WTC11 (cell line): ENCODE measurements at regions of chr19 and their contacts with region 1.

Region 1: DNA sequence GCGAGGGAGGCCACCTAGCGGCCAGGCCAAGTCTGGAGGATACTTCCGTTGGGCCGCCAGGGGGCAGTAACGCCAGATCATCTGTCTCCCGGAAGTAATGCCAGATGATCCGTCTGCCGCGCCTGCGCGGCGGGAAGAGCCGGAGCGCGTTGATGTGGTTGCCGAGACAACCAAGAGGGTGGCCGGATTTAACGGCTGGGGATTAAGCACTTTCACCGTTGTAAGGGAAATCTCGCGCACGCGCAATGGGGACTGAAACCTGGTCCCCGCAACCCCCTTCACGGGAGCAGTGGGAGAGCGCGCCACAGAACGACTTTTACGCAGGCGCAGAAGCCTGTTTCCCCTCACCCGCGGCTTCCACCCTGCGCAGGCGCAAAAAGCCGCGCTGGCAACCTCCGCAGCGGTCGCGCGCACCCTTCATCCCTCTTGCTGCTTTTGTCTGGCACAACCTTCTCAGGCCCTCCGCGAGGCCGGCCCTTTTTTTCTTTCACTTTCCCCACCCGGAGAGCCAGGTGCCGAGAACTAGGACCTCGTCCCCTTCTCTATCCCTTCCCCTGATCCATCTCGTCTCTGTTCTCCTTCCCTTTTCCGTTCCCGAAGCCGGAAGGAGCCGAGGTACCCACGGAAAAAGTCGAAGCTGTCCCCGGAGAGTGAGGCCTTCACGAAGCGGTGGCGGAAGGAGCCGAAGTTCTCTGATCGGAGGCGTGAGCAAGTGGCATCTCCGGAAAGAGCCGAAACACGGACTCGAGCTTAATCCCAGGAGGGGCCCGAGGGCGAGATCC is 886 bp upstream of the U2AF2 start:
- DNase-seq: peak; percentile 100
- ATAC-seq: peak; percentile 87
- H3K4me3 Mint-ChIP-seq: peak overlapping the region; percentile 93
- H3K27ac Mint-ChIP-seq: peak overlapping the region; percentile 98
- H3K4me1 Mint-ChIP-seq: peaks cover 37% of the 10 kb centered on the region
- H3K27me3 Mint-ChIP-seq: peaks cover 3% of the 10 kb centered on the region; the same call in 1 of the 2 replicates
- CTCF ChIP-seq: peak; percentile 91

Region 2: DNA sequence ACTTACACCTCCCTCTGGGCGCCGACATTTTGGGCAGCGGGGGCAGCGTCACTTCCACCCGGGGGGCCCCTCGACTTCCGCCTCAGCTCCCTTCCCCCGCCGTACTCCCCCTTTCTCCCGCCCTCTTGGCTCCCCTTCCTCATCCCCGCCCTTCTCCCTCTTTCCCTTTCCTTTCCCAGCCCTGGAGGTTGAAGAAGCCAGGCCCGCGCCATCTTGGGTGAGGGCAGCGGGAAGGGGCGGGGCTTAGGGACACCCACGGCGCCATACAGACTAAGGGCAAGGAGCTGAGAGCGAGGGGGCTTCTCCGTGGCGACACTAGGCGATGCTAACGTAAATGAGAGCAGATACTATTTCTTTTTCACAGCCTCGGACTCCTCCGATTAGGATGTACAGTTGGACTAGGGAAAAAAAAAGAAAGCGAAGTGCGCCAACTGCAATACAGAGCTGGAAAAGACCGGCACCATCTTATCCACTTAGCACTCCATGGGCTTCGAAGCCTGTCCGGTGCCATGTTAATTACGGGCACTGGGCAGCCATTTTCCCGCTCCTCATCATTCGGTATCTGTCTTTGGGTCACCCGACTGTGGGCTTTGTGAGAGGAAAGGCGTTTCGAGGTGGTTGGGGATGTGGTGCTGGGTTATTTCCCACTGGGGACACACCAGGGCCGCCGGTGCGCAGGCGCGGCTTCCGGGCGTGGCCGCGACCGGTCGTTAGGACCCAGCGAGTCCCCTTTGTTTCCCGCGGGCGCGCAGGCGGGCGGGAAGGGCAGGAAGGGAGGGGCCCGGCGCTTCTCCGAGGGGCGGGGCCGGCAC is 54.3 kb before region 1 on chr19 and contains the start of gene FIZ1:
- CTCF ChIA-PET with region 1: interaction called, 12 read pairs
- POLR2A ChIA-PET with region 1: interaction called, 9 read pairs
- DNase-seq: peak; percentile 98
- ATAC-seq: peak; percentile 54
- H3K4me3 Mint-ChIP-seq: peak within 1 kb of the TSS; percentile 98
- H3K27ac Mint-ChIP-seq: peak within 1 kb of the TSS; percentile 100
- H3K4me1 Mint-ChIP-seq: peaks cover 29% of the 10 kb centered on the region
- H3K27me3 Mint-ChIP-seq: no peaks in the 10 kb centered on the region; the same call in 1 of the 2 replicates
- CTCF ChIP-seq: no peak
- total RNA-seq, gene FIZ1: 20.1 to 22.7 TPM (median 20.6 TPM) in 3 replicates

Region 3: GRCh38 chr19:55624109-55625003 is 29.6 kb before region 1 on chr19 and contains the start of gene ZNF784:
- CTCF ChIA-PET with region 1: interaction called, 14 read pairs
- POLR2A ChIA-PET with region 1: no interaction called
- DNase-seq: peak; percentile 92
- ATAC-seq: peak; percentile 87
- H3K4me3 Mint-ChIP-seq: peak within 1 kb of the TSS; percentile 76
- H3K27ac Mint-ChIP-seq: peak within 1 kb of the TSS; percentile 90
- H3K4me1 Mint-ChIP-seq: peaks cover 15% of the 10 kb centered on the region
- H3K27me3 Mint-ChIP-seq: peaks cover 18% of the 10 kb centered on the region
- CTCF ChIP-seq: no peak
- total RNA-seq, gene ZNF784: 9.9 to 12.1 TPM (median 11.4 TPM) in 3 replicates

Region 4: GRCh38 chr19:55643348-55644176 is 10.4 kb before region 1 on chr19 and contains the start of gene ZNF581:
- CTCF ChIA-PET with region 1: interaction called, 17 read pairs
- POLR2A ChIA-PET with region 1: interaction called, 4 read pairs
- DNase-seq: peak; percentile 72
- ATAC-seq: peak; percentile 9
- H3K4me3 Mint-ChIP-seq: peak within 1 kb of the TSS; percentile 89
- H3K27ac Mint-ChIP-seq: peak within 1 kb of the TSS; percentile 93
- H3K4me1 Mint-ChIP-seq: peaks cover 26% of the 10 kb centered on the region
- H3K27me3 Mint-ChIP-seq: peaks cover 9% of the 10 kb centered on the region
- CTCF ChIP-seq: no peak
- total RNA-seq, gene ZNF581: 94.6 to 100 TPM (median 99.5 TPM) in 3 replicates

Region 5: DNA sequence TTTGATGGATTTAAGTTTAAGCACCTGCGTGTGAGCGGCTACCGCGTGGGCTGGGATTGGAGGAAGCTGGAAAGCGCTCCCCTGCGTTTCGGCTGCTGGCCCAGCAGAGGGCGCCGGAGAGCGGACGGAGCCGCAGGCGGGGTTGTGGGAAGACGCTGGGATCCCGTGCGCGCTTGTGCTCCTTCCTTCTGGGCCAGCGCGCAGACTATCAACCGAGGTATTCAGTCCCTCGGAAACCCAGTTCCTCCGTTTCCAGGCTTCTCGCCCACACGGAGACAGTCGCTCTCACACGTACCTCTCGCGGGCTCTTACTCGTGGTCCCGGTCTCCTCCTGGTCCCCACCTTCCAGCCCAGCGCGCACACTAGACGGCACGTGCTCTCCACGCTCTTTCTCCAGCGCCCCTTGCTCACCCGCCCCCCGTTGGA is 49.9 kb after region 1 on chr19:
- CTCF ChIA-PET with region 1: interaction called, 12 read pairs
- POLR2A ChIA-PET with region 1: no interaction called
- DNase-seq: peak; percentile 83
- ATAC-seq: peak; percentile 85
- H3K4me3 Mint-ChIP-seq: 0 out of 2 replicates have a peak overlapping the region, but pooled peaks have one; percentile 18
- H3K27ac Mint-ChIP-seq: no peak overlapping the region
- H3K4me1 Mint-ChIP-seq: no peaks in the 10 kb centered on the region
- H3K27me3 Mint-ChIP-seq: peaks cover 17% of the 10 kb centered on the region
- CTCF ChIP-seq: peak; percentile 81